ENCODE measurements at regions of chr1 and their contacts with region 1.

Region 1: DNA sequence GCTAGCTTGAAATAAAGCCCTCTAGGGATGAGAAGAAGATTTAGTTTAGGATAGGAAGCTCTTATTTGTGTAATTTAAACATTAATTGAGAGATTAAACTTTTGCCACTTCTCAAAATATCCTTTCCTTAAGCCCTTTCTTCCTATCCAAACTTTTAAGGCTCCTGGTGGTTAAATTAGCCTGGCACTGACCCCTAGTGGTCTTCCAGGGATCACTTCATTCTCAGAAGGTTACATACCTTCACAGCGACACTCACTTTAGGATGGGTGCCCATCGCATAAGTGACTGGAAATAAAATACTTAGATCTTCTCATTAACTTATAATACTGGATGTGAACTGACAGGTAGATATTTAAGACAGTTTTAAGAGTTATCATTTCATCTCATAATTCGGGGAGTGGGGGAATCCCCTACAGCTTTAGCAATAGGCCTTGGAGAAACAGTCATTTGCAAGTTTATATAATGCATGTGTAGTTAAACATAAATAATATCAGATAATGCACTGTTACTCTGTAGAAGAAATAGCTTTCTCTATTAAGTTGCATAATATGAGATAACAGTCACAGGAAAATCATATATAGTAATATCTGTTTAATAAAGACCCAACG is 7.4 kb downstream of the LHX9 start:
- DNase-seq: peak; percentile 16
- H3K4me3 ChIP-seq: no peak overlapping the region
- H3K27ac ChIP-seq: no peak overlapping the region
- H3K27me3 ChIP-seq: peaks cover 57% of the 10 kb centered on the region
- CTCF ChIP-seq: peak; percentile 82

Region 2: GRCh38 chr1:197614916-197615692 is 309.5 kb before region 1 on chr1:
- CTCF ChIA-PET with region 1: interaction called, 54 read pairs
- POLR2A ChIA-PET with region 1: no interaction called
- DNase-seq: peak; percentile 15
- H3K4me3 ChIP-seq: no peak overlapping the region
- H3K27ac ChIP-seq: no peak overlapping the region
- H3K27me3 ChIP-seq: no peaks in the 10 kb centered on the region
- CTCF ChIP-seq: peak; percentile 71